Sigmoid colon (tissue), 7 donors: ENCODE measurements at regions of chr17 and their contacts with region 1.

Region 1: DNA sequence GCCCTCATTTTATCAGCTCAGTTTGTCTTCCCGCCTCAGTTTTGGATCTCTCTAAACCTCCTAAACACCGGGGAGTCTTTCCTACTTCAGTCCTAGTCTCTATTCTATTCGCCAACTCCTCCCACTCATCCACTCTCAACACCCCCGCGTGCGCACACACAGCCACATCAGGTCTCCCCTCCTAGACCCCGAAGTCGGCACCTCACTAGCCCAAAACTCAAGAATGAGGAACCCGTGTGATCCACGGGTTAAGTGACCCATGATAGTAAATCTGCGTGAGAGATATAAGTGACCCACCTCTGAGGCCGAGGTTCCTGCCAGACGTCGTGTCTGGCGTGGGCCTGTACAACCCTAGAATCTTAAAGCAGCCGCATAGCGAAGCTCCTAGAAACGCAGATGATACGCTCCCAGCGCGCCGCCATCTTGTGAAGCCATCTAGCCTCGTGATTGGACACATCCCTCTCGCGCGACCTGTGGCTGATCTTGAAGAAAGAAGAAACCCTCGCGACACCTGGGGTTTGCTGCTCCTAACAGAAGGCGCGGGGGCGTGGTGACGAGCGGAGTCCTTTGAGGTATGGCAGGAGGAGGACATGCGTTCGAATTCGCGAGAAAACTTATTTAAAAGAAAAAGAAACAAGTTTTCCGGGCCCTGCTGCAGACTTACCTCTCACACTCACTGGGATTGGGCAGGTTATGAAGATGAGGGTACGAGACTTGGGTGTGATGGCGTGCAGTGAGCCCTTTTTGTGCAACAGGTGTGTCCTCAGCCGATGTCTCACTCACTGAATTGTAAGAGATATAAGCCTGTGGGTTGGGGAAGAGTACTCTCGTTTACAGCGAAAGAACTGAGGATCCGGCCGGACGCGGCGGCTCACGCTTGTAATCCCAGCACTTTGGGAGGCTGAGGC is at the start of gene METTL16:
- DNase-seq: peak; percentile 99
- H3K4me3 ChIP-seq: peak within 1 kb of the TSS; percentile 62 to 72 (median 67)
- H3K27ac ChIP-seq: peak within 1 kb of the TSS; percentile 89 to 93 (median 90)
- H3K4me1 ChIP-seq: peaks cover 0 to 34% (median 31%) of the 10 kb centered on the region in 4 donors
- H3K27me3 ChIP-seq: no peaks in the 10 kb centered on the region
- CTCF ChIP-seq: no peak
- EP300 ChIP-seq: no peak
- POLR2A ChIP-seq: peak; percentile 68 to 72
- total RNA-seq, gene METTL16: 18.3 to 33.2 (median 24.4) TPM

Region 2: DNA sequence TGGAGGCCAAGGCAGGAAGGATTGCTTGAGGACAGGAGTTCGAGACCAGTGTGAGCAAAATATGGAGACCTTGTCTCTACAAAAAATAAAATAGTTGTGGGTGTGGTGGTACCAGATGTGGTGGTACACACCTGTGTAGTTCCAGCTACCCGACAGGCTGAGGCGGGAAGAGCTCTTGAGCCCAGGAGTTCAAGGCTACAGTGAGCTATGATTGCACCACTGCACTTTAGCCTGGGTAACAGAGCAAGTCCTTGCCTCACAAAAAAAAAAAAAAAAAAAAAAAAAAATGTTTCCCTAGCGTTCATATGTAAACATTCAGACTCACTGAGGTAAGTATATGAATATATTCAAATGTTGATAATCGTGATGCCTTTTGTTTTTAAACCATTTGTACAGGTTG is 160.3 kb after region 1 on chr17:
- intact Hi-C with region 1: loop called (anchors 10 kb)
- DNase-seq: no peak
- H3K4me3 ChIP-seq: no peak overlapping the region
- H3K27ac ChIP-seq: no peak overlapping the region
- H3K4me1 ChIP-seq: no peaks in the 10 kb centered on the region
- H3K27me3 ChIP-seq: no peaks in the 10 kb centered on the region
- CTCF ChIP-seq: no peak
- EP300 ChIP-seq: no peak
- POLR2A ChIP-seq: no peak

Region 3: GRCh38 chr17:2711601-2712299 is 200.0 kb after region 1 on chr17 and contains the start of gene CLUH:
- intact Hi-C with region 1: loop called (anchors 5 kb)
- DNase-seq: peak; percentile 98
- H3K4me3 ChIP-seq: peak within 1 kb of the TSS; percentile 70 to 98 (median 88)
- H3K27ac ChIP-seq: peak within 1 kb of the TSS; percentile 81 to 92 (median 85)
- H3K4me1 ChIP-seq: peaks cover 0 to 59% (median 52%) of the 10 kb centered on the region in 4 donors
- H3K27me3 ChIP-seq: no peaks in the 10 kb centered on the region
- CTCF ChIP-seq: no peak
- EP300 ChIP-seq: peak in 1 of 4 donors; percentile 66
- POLR2A ChIP-seq: peak; percentile 39 to 72
- total RNA-seq, gene CLUH: 26.3 to 70.9 (median 39.3) TPM